ENCODE measurements at regions of chr3 and their contacts with region 1.

Region 1: GRCh38 chr3:149717391-149718056 is 34.8 kb downstream of the COMMD2 start:
- DNase-seq: peak in 1 of 2 donors; percentile 52
- ATAC-seq: no peak
- H3K4me3 ChIP-seq: no peak overlapping the region
- H3K4me3 Mint-ChIP-seq: no peak overlapping the region
- H3K27ac ChIP-seq: no peak overlapping the region
- H3K27ac Mint-ChIP-seq: no peak overlapping the region
- H3K4me1 ChIP-seq: no peaks in the 10 kb centered on the region
- H3K4me1 Mint-ChIP-seq: no peaks in the 10 kb centered on the region
- H3K27me3 ChIP-seq: no peaks in the 10 kb centered on the region
- H3K27me3 Mint-ChIP-seq: peaks cover 4 to 18% of the 10 kb centered on the region in 2 donors
- CTCF ChIP-seq: peak; percentile 65

Region 2: DNA sequence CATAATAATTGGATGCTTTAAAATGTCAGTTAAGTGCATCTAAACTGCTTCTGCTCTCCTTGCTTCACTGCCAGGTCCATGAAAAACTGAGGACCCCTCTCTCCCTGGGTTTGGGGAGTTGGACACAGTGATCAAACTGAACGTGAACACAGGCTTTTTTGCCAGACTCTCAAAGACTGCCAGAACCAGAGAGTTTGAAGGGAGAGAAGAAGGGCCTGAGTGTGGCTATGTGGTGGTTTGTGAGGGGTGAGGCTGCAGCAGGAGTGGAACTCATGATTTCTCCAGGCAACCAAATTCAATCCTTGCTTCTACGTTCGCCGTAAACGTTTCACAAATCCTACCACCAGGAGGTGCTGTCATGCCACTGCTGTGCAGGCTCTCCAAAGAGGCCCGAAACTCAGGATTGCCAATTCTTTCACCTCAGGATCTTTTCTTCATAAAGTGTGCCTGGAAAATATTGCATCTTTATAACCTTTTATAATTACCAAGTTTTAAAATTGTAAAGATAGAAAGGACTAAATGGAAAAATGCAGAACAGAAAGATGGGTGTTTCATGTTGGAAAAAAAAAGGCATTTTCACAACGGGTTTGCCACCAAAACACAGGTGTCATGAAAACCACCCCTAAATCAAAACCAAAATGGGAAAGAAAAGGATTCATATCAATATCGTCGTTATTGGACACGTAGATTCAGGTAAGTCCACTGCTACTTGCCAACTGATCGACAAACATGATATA is 223.3 kb before region 1 on chr3:
- intact Hi-C with region 1: loop called (anchors 1 kb)
- DNase-seq: peak; percentile 23 to 55
- ATAC-seq: peak in 2 of 3 donors; percentile 48 to 63
- H3K4me3 ChIP-seq: no peak overlapping the region
- H3K4me3 Mint-ChIP-seq: no peak overlapping the region
- H3K27ac ChIP-seq: no peak overlapping the region
- H3K27ac Mint-ChIP-seq: no peak overlapping the region
- H3K4me1 ChIP-seq: no peaks in the 10 kb centered on the region
- H3K4me1 Mint-ChIP-seq: no peaks in the 10 kb centered on the region
- H3K27me3 ChIP-seq: no peaks in the 10 kb centered on the region
- H3K27me3 Mint-ChIP-seq: peaks cover 15 to 38% of the 10 kb centered on the region in 2 donors
- CTCF ChIP-seq: peak; percentile 65

Region 3: DNA sequence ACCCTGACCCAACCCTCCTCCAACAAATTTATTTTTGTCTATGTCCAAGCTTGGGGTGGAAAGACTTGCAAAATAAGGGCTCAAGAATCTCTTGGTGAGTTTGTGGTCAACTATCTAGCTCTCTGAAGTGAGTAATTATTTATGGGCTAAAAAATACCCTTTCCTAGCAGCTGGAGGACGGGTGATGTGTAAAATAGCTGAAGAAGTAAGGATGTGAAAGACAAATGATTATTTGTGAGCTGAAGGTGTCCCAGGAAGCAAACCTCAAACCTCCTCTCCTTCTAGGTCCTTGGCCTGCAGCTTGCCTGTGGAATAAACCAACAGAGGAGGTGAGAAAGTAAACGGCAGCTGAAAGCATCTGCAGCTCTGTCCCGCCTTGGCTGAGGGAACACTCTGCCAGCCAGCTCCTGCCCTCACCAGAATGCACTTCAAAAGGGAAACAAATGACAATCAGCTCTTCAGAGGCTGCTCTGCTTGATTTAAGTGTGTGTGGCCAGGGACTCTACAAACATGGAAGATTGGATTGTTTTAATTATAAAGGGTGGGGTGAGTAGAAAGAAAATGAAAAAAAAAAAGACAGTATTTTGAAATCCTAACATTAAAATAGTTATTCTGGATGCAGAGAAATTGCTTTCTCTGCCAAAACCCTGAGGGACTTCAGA is 182.7 kb before region 1 on chr3:
- intact Hi-C with region 1: loop called (anchors 5 kb)
- DNase-seq: no peak
- ATAC-seq: no peak
- H3K4me3 ChIP-seq: no peak overlapping the region
- H3K4me3 Mint-ChIP-seq: no peak overlapping the region
- H3K27ac ChIP-seq: no peak overlapping the region
- H3K27ac Mint-ChIP-seq: no peak overlapping the region
- H3K4me1 ChIP-seq: peaks cover 9% of the 10 kb centered on the region
- H3K4me1 Mint-ChIP-seq: peaks cover 18 to 19% of the 10 kb centered on the region in 2 donors
- H3K27me3 ChIP-seq: no peaks in the 10 kb centered on the region
- H3K27me3 Mint-ChIP-seq: peaks cover 4 to 23% of the 10 kb centered on the region in 2 donors
- CTCF ChIP-seq: no peak